Common myeloid progenitor, CD34-positive (primary cell): ENCODE measurements at regions of chr9 and their contacts with region 1.

Region 1: DNA sequence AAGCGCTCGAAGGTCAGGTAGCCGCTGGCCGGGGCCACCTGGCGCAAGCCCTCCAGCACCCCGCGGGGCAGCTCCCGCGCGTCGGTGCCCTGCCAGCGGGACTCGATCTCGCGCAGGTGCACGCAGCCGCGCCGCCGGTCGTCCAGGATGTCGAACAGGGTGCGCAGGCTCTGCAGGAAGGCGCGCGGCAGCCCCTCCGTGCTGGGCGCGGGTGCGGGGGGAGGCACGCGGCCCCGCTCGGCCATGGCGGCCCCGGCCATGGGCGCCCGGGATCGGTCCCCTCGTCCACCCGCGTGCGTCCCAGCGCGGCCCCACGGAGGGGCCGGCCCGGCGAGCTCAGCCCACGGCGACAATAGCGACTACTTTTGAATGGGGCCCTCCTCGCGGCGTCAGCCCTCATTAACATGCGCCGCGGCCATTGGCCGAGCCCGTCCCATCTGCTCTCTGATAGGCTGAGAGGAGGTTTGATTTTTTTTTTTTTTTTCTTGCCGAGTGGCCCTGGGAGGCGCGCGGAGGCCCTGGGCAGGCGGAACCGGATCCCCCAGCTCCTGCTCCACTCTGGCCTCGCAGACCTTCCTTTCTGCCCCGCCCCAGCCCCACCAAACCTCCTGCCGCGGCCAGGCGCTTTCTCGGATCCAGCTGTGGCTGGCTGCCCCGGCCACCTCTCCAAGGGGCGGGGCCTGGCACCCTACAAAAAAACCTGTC is at the start of gene SAPCD2:
- DNase-seq: peak; percentile 89 to 94 (median 93)
- H3K4me3 ChIP-seq: peak within 1 kb of the TSS; percentile 15 to 76 (median 69)
- H3K27ac ChIP-seq: peak within 1 kb of the TSS in 1 of 2 experiments; percentile 74
- H3K4me1 ChIP-seq: peaks cover 0 to 46% (median 30%) of the 10 kb centered on the region in 4 experiments
- H3K27me3 ChIP-seq: no peaks in the 10 kb centered on the region

Region 2: GRCh38 chr9:136619742-136620440 is 450.5 kb before region 1 on chr9:
- CTCF ChIA-PET with region 1: no interaction called
- POLR2A ChIA-PET with region 1: no interaction called
- DNase-seq: peak in 2 of 3 donors; percentile 72 to 79
- H3K4me3 ChIP-seq: peak overlapping the region in 3 of 7 experiments; percentile 4 to 45 (median 26)
- H3K27ac ChIP-seq: no peak overlapping the region
- H3K4me1 ChIP-seq: peaks cover 0 to 100% (median 79%) of the 10 kb centered on the region in 4 experiments
- H3K27me3 ChIP-seq: no peaks in the 10 kb centered on the region

Region 3: DNA sequence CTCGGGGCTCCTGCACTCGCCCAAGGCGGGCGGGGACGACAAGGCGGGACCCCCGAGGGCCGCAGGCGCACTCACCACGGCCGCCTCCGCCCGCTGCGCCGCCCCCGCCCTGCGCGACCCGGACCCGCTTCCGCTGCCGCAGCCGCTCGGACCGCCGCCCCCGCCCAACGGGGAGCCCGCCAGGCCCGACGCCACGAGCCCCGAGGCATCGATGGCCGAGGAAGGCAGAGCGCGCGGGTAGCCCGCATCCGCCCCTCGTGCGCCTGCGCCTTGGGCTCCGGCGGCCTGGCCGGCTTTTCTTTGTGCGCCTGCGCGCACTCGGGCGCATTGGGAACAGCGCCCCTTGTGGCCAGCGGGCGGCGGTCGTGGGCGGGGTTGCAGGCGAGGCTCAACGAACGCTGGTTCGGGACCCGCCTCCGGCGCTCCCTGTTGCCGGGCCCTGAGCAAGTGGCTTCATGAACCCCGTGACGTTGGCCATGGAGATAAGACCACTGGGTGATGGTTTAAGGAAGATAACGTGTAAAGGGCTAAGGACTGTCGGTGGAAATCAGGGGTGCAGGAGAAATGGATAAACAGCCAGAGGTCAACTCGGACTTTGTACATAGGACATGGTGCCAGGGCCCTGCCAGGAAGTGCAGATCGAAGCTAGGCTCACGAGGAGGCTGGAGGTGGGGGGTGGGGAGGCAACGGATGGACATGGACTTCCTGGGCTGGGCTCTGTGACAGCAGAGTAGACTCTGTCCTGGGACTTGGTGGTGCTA is 125.7 kb before region 1 on chr9 and contains the starts of genes C8G and FBXW5:
- CTCF ChIA-PET with region 1: interaction called, 10 read pairs
- POLR2A ChIA-PET with region 1: no interaction called
- DNase-seq: peak; percentile 89 to 95 (median 94)
- H3K4me3 ChIP-seq: peak within 1 kb of the TSS; percentile 64 to 91 (median 81)
- H3K27ac ChIP-seq: peak within 1 kb of the TSS; percentile 54 to 81
- H3K4me1 ChIP-seq: peaks cover 0 to 29% (median 25%) of the 10 kb centered on the region in 4 experiments
- H3K27me3 ChIP-seq: no peaks in the 10 kb centered on the region

Region 4: DNA sequence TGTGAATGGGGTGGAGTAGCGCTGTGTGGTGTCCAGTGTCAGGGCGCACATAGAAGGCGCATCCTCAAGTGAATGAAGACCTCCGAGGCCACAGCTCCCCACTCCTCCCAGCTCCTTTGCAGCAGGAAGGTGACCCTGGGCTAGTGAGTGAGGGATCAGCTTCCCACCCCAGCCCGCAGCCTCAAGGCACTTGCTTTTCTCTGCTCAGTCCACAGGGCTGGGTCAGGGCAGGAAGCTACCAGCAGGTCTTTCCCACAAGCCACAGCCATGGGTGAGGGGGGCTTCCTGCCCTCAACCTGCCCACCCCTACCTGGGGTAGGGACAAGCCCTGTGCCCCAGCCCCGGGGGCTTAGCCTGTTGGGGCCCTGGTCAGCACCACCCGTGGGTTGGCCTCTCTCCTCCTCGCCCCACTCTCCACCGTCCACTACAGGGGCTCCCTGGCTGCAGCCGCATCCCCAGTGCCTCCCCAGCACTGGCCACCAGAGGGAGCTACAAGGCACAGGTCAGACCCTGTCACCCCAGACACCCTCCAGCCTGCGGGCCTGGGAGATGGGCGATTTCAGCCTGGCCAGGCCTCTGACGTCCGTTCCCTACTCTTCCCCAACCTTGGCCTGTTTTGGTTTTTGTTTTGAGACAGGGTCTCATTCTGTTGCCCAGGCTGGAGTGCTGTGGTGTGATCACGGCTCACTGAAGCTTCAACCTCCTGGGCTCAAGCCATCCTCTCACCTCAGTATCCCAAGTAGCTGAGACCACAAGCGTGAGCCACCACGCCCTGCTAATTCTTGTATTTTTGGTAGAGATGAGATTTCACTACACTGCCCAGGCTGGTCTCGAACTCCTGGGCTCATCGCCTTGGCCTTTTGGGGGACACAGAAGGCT is 41.1 kb before region 1 on chr9:
- CTCF ChIA-PET with region 1: interaction called, 20 read pairs
- POLR2A ChIA-PET with region 1: no interaction called
- DNase-seq: peak; percentile 50 to 70 (median 63)
- H3K4me3 ChIP-seq: peak overlapping the region; percentile 28 to 83 (median 73)
- H3K27ac ChIP-seq: peak overlapping the region; percentile 77 to 87
- H3K4me1 ChIP-seq: peaks cover 0 to 85% (median 79%) of the 10 kb centered on the region in 4 experiments
- H3K27me3 ChIP-seq: no peaks in the 10 kb centered on the region

Region 5: DNA sequence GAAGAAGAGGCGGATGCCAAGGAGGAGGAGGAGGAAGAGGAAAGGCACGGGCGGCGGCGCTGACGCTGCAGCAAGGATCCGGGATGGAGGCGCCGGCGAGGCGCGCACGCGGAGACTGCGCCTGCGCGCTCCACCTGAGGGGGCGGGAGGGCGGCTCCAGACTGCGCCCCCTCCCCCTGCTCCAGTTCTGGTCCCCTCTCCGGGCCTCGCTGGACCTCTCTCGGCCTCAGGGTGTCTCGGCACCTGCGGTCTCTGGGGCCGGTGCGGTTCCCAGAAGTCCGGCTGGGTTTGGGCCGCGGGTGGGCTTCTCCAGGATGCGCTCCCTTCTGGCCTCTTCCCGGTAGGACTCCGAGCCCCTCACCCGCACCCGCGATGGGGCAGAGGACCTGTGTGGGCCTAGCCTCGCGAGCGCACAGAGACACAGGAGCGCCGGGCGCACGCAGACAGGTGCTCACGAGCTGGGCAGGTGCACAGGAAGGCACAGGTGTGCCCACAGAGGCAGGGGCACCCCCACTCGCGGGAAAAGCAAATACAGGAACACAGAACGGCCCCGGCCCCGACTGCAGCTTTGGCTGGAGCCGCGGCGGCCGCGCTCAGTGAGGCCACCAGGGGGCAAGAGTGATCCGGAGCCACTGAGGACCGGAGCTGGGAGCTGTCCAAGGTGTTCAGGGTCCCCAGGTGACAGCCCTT is 24.1 kb before region 1 on chr9 and contains the start of gene NPDC1:
- CTCF ChIA-PET with region 1: interaction called, 48 read pairs
- POLR2A ChIA-PET with region 1: interaction called, 4 read pairs
- DNase-seq: peak; percentile 72 to 86 (median 86)
- H3K4me3 ChIP-seq: peak within 1 kb of the TSS; percentile 51 to 85 (median 73)
- H3K27ac ChIP-seq: no peak within 1 kb of the TSS
- H3K4me1 ChIP-seq: peaks cover 0 to 50% (median 45%) of the 10 kb centered on the region in 4 experiments
- H3K27me3 ChIP-seq: peaks cover 0 to 39% (median 12%) of the 10 kb centered on the region in 5 experiments

Region 6: GRCh38 chr9:137055385-137056364 is 14.7 kb before region 1 on chr9:
- CTCF ChIA-PET with region 1: interaction called, 76 read pairs
- POLR2A ChIA-PET with region 1: no interaction called
- DNase-seq: no peak
- H3K4me3 ChIP-seq: no peak overlapping the region
- H3K27ac ChIP-seq: no peak overlapping the region
- H3K4me1 ChIP-seq: peaks cover 0 to 33% (median 21%) of the 10 kb centered on the region in 4 experiments
- H3K27me3 ChIP-seq: peaks cover 0 to 55% (median 18%) of the 10 kb centered on the region in 5 experiments

Region 7: GRCh38 chr9:137086531-137087408 is 16.4 kb after region 1 on chr9 and contains the start of gene MAN1B1:
- CTCF ChIA-PET with region 1: interaction called, 11 read pairs
- POLR2A ChIA-PET with region 1: no interaction called
- DNase-seq: peak; percentile 98 to 99 (median 99)
- H3K4me3 ChIP-seq: peak within 1 kb of the TSS; percentile 42 to 88 (median 82)
- H3K27ac ChIP-seq: peak within 1 kb of the TSS; percentile 61 to 79
- H3K4me1 ChIP-seq: peaks cover 8 to 29% (median 21%) of the 10 kb centered on the region in 4 experiments
- H3K27me3 ChIP-seq: no peaks in the 10 kb centered on the region

Region 8: DNA sequence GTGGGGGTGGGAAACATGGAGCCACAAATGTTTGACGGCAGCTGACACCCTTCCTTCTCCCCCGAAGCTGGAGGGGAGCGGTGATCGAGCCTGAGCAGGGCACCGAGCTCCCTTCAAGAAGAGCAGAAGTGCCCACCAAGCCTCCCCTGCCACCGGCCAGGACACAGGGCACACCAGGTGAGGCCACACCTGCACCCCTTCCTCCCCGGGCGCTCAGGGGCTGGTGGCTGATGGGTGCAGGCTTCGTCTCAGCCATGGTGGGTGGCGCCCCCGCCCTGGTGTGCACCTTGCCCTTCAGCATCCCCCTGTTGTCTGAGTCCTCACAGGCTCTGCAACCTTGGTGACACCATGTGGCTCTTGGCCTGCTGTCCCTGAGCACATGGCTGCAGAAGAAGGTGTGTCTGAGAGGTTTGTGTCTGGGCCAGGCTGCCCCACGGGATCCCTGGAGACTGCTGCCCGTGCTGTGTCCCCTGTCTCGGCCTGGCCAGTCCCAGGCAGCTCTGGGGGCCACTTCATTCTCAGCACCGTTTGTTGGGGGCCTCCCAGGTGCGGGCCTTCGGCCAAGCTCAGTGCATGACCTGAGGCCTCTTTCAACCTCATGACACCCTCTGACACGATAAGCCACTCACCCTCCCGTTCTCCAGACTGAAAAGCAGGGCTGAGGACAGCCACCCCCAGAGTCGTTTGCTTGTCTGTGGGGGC is 27.6 kb after region 1 on chr9:
- CTCF ChIA-PET with region 1: no interaction called
- POLR2A ChIA-PET with region 1: no interaction called
- DNase-seq: no peak
- H3K4me3 ChIP-seq: no peak overlapping the region
- H3K27ac ChIP-seq: no peak overlapping the region
- H3K4me1 ChIP-seq: no peaks in the 10 kb centered on the region
- H3K27me3 ChIP-seq: no peaks in the 10 kb centered on the region

Region 9: DNA sequence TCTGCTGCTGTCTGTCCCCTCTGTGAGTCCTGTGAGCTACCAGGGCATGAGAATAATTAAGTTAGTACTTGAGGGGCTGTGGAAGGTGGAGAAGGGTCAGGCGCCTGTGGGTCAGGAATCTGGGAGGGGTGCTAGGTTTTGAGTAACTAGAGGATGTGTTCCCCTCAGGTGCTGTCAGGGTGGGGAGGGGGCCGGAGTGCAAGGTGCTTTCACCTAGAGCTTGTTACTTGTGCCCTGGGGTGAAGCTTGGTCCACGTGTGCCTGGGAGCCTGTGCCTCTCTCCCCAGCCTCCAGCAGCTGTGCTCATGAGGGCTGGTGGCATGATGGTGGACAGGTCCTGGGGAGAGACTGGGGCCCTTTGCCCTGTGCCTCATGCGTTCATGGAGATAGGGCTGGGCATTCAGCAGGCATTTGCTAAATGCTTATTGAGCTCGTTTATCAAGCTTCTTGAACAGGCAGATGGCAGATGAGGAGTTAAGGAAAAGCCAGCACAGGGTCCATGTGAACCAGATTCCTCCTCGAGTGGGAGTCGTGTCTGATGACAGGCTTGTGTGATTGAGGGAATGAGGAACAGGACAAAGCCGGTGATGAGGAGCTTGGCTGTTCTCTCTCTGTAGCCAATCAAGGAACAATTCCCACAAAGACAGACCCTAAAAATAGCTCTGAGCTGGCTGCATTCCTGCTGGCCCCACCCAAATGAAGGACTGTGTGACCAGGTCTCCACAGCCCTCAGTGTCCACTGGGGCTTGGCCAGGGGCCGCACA is 848.2 kb after region 1 on chr9:
- CTCF ChIA-PET with region 1: no interaction called
- POLR2A ChIA-PET with region 1: no interaction called
- DNase-seq: no peak
- H3K4me3 ChIP-seq: no peak overlapping the region
- H3K27ac ChIP-seq: no peak overlapping the region
- H3K4me1 ChIP-seq: no peaks in the 10 kb centered on the region
- H3K27me3 ChIP-seq: peaks cover 0 to 5% (median 0%) of the 10 kb centered on the region in 5 experiments